CD4-positive, alpha-beta memory T cell (primary cell): ENCODE measurements at regions of chr12 and their contacts with region 1.

Region 1: GRCh38 chr12:59595883-59596540 is at the start of gene SLC16A7:
- DNase-seq: peak; percentile 80 to 84 (median 82)
- H3K4me3 ChIP-seq: peak within 1 kb of the TSS; percentile 83 to 90
- H3K4me3 Mint-ChIP-seq: peak within 1 kb of the TSS; percentile 90 to 97 (median 96)
- H3K27ac ChIP-seq: peak within 1 kb of the TSS; percentile 75
- H3K27ac Mint-ChIP-seq: peak within 1 kb of the TSS; percentile 95 to 99 (median 98)
- H3K4me1 ChIP-seq: peaks cover 47% of the 10 kb centered on the region
- H3K4me1 Mint-ChIP-seq: peaks cover 32 to 62% (median 50%) of the 10 kb centered on the region in 4 donors
- H3K27me3 ChIP-seq: no peaks in the 10 kb centered on the region
- H3K27me3 Mint-ChIP-seq: no peaks in the 10 kb centered on the region
- total RNA-seq, gene SLC16A7: 52.8 to 52.9 TPM

Region 2: DNA sequence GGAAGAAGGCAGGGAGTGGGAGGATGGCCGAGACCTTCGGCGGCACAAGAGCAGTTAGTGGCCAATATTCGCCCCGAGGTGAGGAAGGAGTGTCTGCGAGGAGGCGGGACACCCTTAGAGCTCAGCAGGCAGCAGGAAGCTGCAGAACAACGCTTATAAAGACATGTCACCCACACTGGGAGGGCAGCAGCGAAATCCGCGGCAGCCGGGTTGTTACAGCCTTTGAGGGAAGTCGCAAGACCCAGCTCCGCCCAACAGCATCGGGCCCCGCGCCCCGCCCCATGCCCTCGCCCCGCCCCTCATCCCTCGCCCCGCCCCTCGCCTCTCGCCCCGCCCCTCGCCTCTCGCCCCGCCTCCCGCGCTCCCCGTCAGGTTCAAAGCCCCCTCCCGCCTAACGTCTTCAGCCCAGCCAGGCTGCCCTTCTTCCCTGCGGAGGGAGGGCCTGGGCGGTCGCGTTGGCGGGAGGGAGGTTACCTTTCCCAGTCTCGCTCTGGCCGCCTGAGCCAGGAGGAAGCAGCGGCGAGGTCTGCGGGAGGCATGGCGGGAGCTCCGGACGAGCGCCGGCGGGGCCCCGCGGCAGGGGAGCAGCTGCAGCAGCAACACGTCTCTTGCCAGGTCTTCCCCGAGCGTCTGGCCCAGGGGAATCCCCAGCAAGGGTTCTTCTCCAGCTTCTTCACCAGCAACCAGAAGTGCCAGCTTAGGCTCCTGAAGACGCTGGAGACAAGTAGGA is 1654.7 kb before region 1 on chr12 and contains the start of gene ATP23:
- CTCF ChIA-PET with region 1: no interaction called
- POLR2A ChIA-PET with region 1: no interaction called
- intact Hi-C with region 1: loop called (anchors 10 kb)
- DNase-seq: peak; percentile 90 to 95 (median 94)
- H3K4me3 ChIP-seq: peak within 1 kb of the TSS; percentile 67 to 82
- H3K4me3 Mint-ChIP-seq: peak within 1 kb of the TSS; percentile 96 to 99 (median 99)
- H3K27ac ChIP-seq: peak within 1 kb of the TSS; percentile 90
- H3K27ac Mint-ChIP-seq: peak within 1 kb of the TSS; percentile 85 to 100 (median 99)
- H3K4me1 ChIP-seq: peaks cover 23% of the 10 kb centered on the region
- H3K4me1 Mint-ChIP-seq: peaks cover 24 to 49% (median 32%) of the 10 kb centered on the region in 4 donors
- H3K27me3 ChIP-seq: no peaks in the 10 kb centered on the region
- H3K27me3 Mint-ChIP-seq: no peaks in the 10 kb centered on the region
- total RNA-seq, gene ATP23: 6.1 to 6.7 TPM

Region 3: GRCh38 chr12:59444932-59445331 is 151.1 kb before region 1 on chr12:
- CTCF ChIA-PET with region 1: no interaction called
- POLR2A ChIA-PET with region 1: interaction called, 3 read pairs
- intact Hi-C with region 1: loop called (anchors 5 kb)
- DNase-seq: peak in 4 of 5 donors; percentile 7 to 24 (median 18)
- H3K4me3 ChIP-seq: no peak overlapping the region
- H3K4me3 Mint-ChIP-seq: no peak overlapping the region
- H3K27ac ChIP-seq: no peak overlapping the region
- H3K27ac Mint-ChIP-seq: no peak overlapping the region
- H3K4me1 ChIP-seq: no peaks in the 10 kb centered on the region
- H3K4me1 Mint-ChIP-seq: no peaks in the 10 kb centered on the region
- H3K27me3 ChIP-seq: no peaks in the 10 kb centered on the region
- H3K27me3 Mint-ChIP-seq: peaks cover 1 to 3% of the 10 kb centered on the region in 2 donors

Region 4: DNA sequence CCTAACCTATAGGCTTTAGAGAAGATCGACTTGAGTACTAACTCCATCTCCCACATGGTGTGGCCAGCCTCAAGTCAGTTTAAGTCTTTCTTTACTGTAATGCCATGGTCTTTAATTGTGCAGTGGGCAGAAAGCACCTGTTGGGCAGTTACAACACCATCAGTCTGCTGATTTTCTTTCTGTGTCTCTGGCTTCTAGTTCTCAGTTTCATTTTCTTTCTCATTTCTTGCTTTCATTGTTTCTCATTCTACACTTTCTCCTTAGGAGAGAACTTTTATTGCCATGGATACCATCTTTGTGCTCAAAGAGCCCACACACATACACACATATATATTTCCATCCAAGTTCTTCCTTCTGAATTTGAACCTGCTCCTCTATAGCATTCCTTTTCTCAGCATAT is 96.2 kb before region 1 on chr12:
- CTCF ChIA-PET with region 1: no interaction called
- POLR2A ChIA-PET with region 1: no interaction called
- intact Hi-C with region 1: no loop called
- DNase-seq: no peak
- H3K4me3 ChIP-seq: no peak overlapping the region
- H3K4me3 Mint-ChIP-seq: peak overlapping the region in 1 of 8 donors; percentile 16
- H3K27ac ChIP-seq: no peak overlapping the region
- H3K27ac Mint-ChIP-seq: no peak overlapping the region
- H3K4me1 ChIP-seq: no peaks in the 10 kb centered on the region
- H3K4me1 Mint-ChIP-seq: peaks cover 4 to 9% (median 6%) of the 10 kb centered on the region in 4 donors
- H3K27me3 ChIP-seq: peaks cover 5% of the 10 kb centered on the region
- H3K27me3 Mint-ChIP-seq: peaks cover 1 to 6% of the 10 kb centered on the region in 2 donors

Region 5: GRCh38 chr12:59548930-59549329 is 47.1 kb before region 1 on chr12:
- CTCF ChIA-PET with region 1: no interaction called
- POLR2A ChIA-PET with region 1: interaction called, 12 read pairs
- intact Hi-C with region 1: no loop called
- DNase-seq: peak in 4 of 5 donors; percentile 4 to 34 (median 20)
- H3K4me3 ChIP-seq: no peak overlapping the region
- H3K4me3 Mint-ChIP-seq: peak overlapping the region in 4 of 8 donors; percentile 5 to 40 (median 14)
- H3K27ac ChIP-seq: no peak overlapping the region
- H3K27ac Mint-ChIP-seq: peak overlapping the region in 4 of 7 donors; percentile 35 to 65 (median 58)
- H3K4me1 ChIP-seq: peaks cover 16% of the 10 kb centered on the region
- H3K4me1 Mint-ChIP-seq: peaks cover 12 to 23% (median 21%) of the 10 kb centered on the region in 4 donors
- H3K27me3 ChIP-seq: no peaks in the 10 kb centered on the region
- H3K27me3 Mint-ChIP-seq: peaks cover 0 to 4% of the 10 kb centered on the region in 2 donors

Region 6: DNA sequence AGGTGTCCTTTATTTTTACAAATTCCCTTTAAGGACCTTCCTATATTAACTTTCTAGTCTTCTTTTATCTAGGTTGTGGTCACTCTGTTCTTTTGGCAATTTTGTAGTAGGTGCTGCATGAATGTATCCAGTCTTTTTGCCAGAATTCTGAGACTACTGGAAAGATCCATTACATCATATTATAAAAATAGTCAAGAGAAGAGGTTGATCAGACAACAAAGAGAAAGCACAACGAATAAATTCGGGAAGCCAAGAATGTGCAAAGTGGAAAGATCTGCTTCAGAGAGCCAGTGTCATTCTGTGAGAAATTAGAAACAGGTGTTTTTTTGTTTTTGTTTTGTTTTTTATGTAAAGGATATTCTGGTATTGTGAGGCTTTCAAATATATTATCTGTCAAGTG is 16.0 kb before region 1 on chr12:
- CTCF ChIA-PET with region 1: interaction called, 4 read pairs
- POLR2A ChIA-PET with region 1: interaction called, 20 read pairs
- intact Hi-C with region 1: loop called (anchors 1 kb)
- DNase-seq: no peak
- H3K4me3 ChIP-seq: no peak overlapping the region
- H3K4me3 Mint-ChIP-seq: no peak overlapping the region
- H3K27ac ChIP-seq: no peak overlapping the region
- H3K27ac Mint-ChIP-seq: no peak overlapping the region
- H3K4me1 ChIP-seq: peaks cover 26% of the 10 kb centered on the region
- H3K4me1 Mint-ChIP-seq: peaks cover 25 to 48% (median 40%) of the 10 kb centered on the region in 4 donors
- H3K27me3 ChIP-seq: no peaks in the 10 kb centered on the region
- H3K27me3 Mint-ChIP-seq: no peaks in the 10 kb centered on the region

Region 7: GRCh38 chr12:59776482-59776881 is 180.5 kb after region 1 on chr12:
- CTCF ChIA-PET with region 1: no interaction called
- POLR2A ChIA-PET with region 1: no interaction called
- intact Hi-C with region 1: loop called (anchors 5 kb)
- DNase-seq: no peak
- H3K4me3 ChIP-seq: no peak overlapping the region
- H3K4me3 Mint-ChIP-seq: no peak overlapping the region
- H3K27ac ChIP-seq: no peak overlapping the region
- H3K27ac Mint-ChIP-seq: no peak overlapping the region
- H3K4me1 ChIP-seq: no peaks in the 10 kb centered on the region
- H3K4me1 Mint-ChIP-seq: peaks cover 0 to 1% (median 0%) of the 10 kb centered on the region in 4 donors
- H3K27me3 ChIP-seq: no peaks in the 10 kb centered on the region
- H3K27me3 Mint-ChIP-seq: no peaks in the 10 kb centered on the region

Region 8: DNA sequence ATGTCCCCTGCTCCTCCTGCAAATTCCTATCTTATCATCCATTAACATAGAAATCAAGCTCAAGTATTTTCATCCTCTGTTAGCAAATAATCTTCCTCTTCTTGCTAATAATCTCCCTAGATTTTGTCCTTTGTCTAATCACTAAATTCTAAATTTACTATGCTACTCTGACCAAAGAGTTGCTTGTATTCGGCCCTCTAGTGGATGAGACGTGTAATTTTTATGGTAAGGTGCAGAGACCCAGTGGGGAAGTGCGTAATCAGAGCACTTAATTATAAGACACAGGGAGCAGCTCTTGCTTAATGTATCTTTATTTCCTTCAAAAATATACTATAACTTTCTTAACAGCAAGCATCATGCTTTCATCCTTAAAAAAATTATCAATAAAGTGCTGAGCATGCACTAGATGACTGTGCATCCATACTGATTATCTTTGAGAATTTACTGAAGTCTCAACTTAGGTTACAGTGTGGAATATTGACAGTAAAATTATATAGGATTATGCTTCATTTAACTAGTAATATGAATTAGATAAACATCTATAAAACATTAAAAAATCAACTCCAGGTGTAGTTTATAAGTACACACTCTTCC is 212.4 kb after region 1 on chr12:
- CTCF ChIA-PET with region 1: interaction called, 4 read pairs
- POLR2A ChIA-PET with region 1: no interaction called
- intact Hi-C with region 1: loop called (anchors 1 kb)
- DNase-seq: peak in 4 of 5 donors; percentile 22 to 38 (median 32)
- H3K4me3 ChIP-seq: no peak overlapping the region
- H3K4me3 Mint-ChIP-seq: no peak overlapping the region
- H3K27ac ChIP-seq: no peak overlapping the region
- H3K27ac Mint-ChIP-seq: no peak overlapping the region
- H3K4me1 ChIP-seq: no peaks in the 10 kb centered on the region
- H3K4me1 Mint-ChIP-seq: peaks cover 0 to 1% (median under 1%) of the 10 kb centered on the region in 4 donors
- H3K27me3 ChIP-seq: no peaks in the 10 kb centered on the region
- H3K27me3 Mint-ChIP-seq: peaks cover 2 to 4% of the 10 kb centered on the region in 2 donors